ENCODE measurements at regions of chr1 and their contacts with region 1.

Region 1: GRCh38 chr1:72037745-72038343 is 244.5 kb downstream of the NEGR1 start:
- DNase-seq: peak; percentile 43 to 66 (median 54)
- ATAC-seq: peak; percentile 42
- H3K4me3 ChIP-seq: no peak overlapping the region
- H3K27ac ChIP-seq: no peak overlapping the region
- H3K4me1 ChIP-seq: peaks cover 4% of the 10 kb centered on the region
- H3K27me3 ChIP-seq: no peaks in the 10 kb centered on the region
- CTCF ChIP-seq: peak; percentile 13 to 59 (median 45)
- POLR2A ChIP-seq: no peak

Region 2: DNA sequence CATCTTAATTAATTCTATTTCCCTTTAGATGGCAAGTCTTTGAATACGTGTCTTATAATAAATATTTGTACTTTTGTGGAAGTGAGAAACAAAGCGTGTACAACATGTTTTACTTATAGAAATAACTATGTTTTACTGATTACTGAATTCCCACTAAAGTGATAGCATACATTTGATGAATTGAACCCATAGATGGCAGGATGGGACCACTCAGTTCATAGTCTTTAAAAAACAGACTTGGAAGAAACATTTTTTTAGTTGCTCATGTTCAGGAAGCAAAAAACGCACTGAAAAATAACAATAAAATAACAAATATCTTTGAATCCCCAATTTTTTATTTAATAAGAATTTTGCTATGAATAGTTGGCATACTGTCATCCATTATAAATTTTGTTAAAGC is 449.9 kb before region 1 on chr1:
- intact Hi-C with region 1: loop called (anchors 10 kb)
- DNase-seq: no peak
- ATAC-seq: no peak
- H3K4me3 ChIP-seq: no peak overlapping the region
- H3K27ac ChIP-seq: no peak overlapping the region
- H3K4me1 ChIP-seq: no peaks in the 10 kb centered on the region
- H3K27me3 ChIP-seq: no peaks in the 10 kb centered on the region
- CTCF ChIP-seq: peak in 4 of 7 experiments; percentile 46 to 61 (median 54)
- POLR2A ChIP-seq: no peak

Measured in body of pancreas (tissue), 4 donors.